PC-3 (cell line): ENCODE measurements at regions of chr1 and their contacts with region 1.

Region 1: DNA sequence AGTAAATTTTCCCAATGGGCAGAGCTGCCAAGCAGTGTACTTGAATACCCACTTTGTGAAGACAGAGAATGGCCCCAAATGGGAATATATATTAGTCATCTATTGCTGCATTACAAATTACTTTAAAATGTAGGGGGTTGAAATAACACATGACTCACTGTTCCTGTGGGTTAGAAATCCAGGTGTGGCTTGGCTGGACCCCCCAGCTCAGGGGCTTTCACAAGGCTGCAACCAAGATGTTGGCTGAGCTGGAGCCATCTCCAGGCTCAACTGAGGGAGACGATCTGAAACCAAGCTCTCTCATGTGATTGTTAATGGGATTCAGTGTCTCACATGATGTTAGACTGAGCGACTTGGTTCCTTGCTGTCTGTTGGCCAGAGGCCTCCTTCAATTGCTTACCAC is 33.4 kb upstream of the ARHGAP29 start:
- DNase-seq: peak; percentile 96
- ATAC-seq: peak; percentile 70
- H3K4me3 ChIP-seq: no peak overlapping the region
- H3K27ac ChIP-seq: peak overlapping the region; percentile 94
- H3K4me1 ChIP-seq: peaks cover 53% of the 10 kb centered on the region
- H3K27me3 ChIP-seq: no peaks in the 10 kb centered on the region
- CTCF ChIP-seq: no peak

Region 2: DNA sequence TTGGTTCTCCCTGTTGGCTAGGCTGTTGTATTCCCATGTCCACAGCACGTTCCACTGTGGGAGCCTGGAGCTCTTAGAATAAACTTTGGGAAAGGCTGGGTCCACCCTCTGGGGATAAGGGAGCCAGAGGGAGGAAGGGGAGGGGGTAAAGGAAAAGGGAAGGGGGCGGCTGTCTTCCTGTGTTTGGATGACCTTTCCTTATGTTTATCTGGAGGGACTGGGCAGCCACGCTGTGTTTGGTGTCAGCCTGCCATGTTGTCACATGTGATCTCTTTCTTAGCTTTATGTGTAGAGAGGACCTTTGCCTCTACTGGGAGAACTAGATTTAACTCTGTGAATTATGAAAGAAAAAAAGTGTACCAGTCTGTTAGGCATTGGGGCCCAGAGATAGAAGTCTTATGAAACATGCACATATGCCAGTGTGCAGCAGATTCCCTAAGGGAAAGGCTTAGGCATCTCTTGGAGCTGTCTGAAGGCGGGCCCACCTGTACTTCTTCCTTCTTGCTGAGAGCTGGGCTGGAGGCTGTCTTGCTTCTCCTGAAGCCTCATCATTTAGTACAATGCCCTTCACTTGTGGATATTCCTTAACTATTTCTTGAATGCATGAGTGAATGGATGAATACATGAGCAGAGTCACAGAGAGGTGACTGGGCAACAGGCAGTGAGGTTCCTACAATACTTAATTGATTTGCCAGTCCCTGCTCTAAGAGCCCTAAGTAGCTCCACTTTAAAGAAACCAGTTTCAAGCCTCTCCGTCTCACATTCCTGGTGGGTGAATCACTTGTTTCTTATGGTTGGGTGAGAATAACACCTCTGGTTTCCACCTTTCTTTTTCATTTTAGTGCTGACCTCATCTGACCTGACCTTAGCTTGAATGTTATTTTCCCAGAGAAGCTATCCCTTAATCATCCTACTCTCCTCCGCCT is 29.1 kb after region 1 on chr1:
- CTCF ChIA-PET with region 1: no interaction called
- POLR2A ChIA-PET with region 1: interaction called, 4 read pairs
- intact Hi-C with region 1: loop called (anchors 2 kb)
- DNase-seq: peak; percentile 93
- ATAC-seq: peak; percentile 38
- H3K4me3 ChIP-seq: no peak overlapping the region
- H3K27ac ChIP-seq: peak overlapping the region; percentile 60
- H3K4me1 ChIP-seq: peaks cover 70% of the 10 kb centered on the region
- H3K27me3 ChIP-seq: no peaks in the 10 kb centered on the region
- CTCF ChIP-seq: no peak

Region 3: GRCh38 chr1:94417978-94418663 is 147.3 kb after region 1 on chr1 and contains the start of gene ABCD3:
- CTCF ChIA-PET with region 1: no interaction called
- POLR2A ChIA-PET with region 1: no interaction called
- intact Hi-C with region 1: no loop called
- DNase-seq: peak; percentile 97
- ATAC-seq: peak; percentile 83
- H3K4me3 ChIP-seq: peak within 1 kb of the TSS; percentile 85
- H3K27ac ChIP-seq: peak within 1 kb of the TSS; percentile 38
- H3K4me1 ChIP-seq: peaks cover 40% of the 10 kb centered on the region
- H3K27me3 ChIP-seq: no peaks in the 10 kb centered on the region
- CTCF ChIP-seq: no peak
- total RNA-seq, gene ABCD3: 31.7 and 36.3 TPM in 2 replicates